Esophagus muscularis mucosa (tissue), 4 donors: ENCODE measurements at regions of chr18 and their contacts with region 1.

Region 1: DNA sequence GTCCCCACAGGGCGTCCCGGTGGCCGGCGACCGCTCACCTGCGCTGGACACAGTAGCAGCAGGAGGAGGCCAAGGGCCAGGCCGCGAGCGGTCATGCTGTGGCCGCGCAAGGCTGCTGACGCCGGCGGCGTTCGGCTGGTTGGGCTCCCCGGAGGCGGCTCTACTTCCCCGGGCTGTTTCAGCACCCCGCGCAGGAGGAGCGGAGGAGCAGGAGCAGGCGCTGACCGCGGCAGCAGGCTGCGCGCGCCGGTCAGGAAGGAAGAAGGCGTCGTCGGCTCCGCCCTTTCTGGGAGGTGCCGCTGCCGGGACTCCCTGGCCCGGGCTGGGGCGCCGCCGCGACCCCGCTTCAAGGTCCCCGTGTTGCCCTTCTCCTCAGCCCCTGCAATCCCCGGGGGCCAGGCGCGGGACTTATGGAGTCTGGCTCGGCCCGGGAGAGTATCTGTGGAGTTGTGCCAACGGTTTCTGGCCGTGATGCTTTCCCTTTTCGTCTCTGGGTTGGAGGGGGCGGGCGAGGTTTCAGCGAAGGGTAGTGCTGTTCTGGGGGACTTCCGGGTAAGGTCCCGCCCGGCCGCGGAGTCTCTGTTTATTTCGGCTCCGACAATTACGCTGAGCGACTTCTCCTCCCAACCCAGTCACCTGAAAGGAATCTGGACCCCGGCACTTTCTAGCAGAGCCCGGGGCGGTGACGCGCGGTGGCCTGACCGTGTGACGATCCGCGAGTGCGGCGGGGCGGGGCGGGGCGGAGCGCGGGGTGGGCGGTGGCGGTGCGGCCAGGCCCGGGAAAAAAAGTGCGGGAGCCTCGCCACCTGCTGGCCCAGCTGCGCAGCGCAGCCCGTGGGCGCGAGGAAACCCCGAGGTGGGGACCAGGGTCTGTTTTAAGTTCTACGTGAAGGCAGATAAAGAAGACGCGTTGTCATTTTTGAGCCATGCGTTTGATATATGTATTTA is at the start of gene NPC1:
- DNase-seq: peak; percentile 97
- H3K4me3 ChIP-seq: peak within 1 kb of the TSS; percentile 84 to 97 (median 92)
- H3K27ac ChIP-seq: peak within 1 kb of the TSS; percentile 98 to 100 (median 99)
- H3K4me1 ChIP-seq: peaks cover 30 to 53% (median 49%) of the 10 kb centered on the region in 4 donors
- H3K27me3 ChIP-seq: no peaks in the 10 kb centered on the region
- CTCF ChIP-seq: peak; percentile 93 to 98 (median 98)
- EP300 ChIP-seq: no peak
- POLR2A ChIP-seq: peak; percentile 90
- total RNA-seq, gene NPC1: 39.9 to 63.7 (median 45.6) TPM

Region 2: DNA sequence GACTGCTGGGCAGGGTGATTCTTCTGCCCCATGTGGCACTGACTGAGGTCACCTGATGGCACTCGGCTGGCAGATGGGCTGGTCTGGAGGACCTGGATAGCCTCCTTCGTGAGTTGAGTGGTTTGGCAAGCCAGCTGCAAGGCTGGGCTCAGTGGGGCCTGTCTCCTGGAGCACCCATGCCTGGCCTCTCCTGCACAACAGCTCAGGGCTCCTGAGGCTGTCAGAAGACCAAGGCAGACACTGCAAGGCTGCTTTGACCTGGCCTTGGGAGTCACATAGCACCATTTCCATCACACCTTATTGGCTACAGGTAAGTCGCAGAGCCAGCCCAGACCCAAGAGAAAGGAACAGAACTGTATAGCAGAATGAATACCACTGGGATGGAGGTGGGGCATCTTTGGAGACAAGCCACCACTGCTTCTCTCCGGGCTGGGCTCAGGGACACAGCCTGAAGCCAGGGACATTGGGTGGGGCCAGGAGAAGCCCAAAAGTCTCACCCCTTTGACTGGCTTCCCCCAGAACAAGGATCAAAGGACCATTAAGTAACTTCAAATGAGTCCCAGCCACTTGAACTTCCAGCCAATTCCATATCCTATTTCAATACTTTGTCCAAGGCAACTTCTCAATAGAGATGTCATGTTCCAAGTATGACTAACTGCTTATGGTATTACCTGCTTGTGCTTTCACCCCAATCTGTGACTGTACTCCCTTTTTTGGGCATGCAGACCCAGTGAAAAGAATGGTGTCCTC is 294.9 kb before region 1 on chr18:
- intact Hi-C with region 1: no loop called
- DNase-seq: no peak
- H3K4me3 ChIP-seq: no peak overlapping the region
- H3K27ac ChIP-seq: no peak overlapping the region
- H3K4me1 ChIP-seq: peaks cover 0 to 6% (median 0%) of the 10 kb centered on the region in 4 donors
- H3K27me3 ChIP-seq: no peaks in the 10 kb centered on the region
- CTCF ChIP-seq: no peak
- EP300 ChIP-seq: no peak
- POLR2A ChIP-seq: no peak

Region 3: DNA sequence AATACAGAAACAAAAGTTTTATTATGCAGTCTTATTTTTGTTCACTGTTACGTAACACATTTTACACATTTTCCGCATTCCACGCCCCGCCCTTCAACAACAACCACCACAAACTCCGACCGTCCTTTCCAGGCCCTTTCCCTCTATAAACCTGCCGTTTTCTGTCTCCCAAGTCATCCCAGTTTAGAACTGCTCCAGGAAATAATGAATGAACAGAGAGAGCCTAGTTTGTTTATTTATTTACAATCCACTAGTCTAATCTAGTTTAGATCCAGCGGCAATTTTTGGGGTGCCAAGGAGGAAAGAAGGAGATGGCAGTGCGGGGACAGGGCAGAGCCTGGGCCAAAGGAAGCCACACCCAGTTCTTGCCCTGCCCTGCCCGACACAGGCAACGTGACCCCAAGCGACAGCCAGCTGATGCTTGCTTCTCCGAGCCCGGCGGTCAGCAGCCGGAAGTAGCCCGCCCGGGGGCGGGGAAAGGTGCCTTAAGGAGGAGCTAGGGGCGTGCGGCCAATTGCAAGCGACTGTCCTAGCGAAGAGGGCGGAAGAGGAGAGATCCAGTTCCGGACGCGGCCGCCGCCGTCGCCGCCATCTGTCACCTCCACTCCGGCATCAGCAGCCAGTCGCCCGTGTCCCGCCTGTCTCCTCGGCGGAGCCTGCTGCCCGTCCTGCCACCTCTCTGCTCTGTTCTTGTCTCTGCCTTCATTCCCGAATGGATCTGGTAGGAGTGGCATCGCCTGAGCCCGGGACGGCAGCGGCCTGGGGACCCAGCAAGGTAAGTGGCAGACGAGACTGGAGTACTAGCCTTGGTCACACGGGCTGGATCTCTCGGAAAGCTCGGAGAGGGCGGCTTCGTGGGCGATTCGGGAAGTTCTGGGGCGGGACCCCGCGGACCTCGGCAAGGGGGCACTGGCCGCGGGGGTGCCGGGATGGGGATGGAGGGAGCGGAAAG is 133.5 kb before region 1 on chr18 and contains the start of gene RIOK3:
- intact Hi-C with region 1: loop called (anchors 10 kb)
- DNase-seq: peak; percentile 98
- H3K4me3 ChIP-seq: peak within 1 kb of the TSS; percentile 89 to 99 (median 92)
- H3K27ac ChIP-seq: peak within 1 kb of the TSS; percentile 92 to 98 (median 95)
- H3K4me1 ChIP-seq: peaks cover 29 to 54% (median 50%) of the 10 kb centered on the region in 4 donors
- H3K27me3 ChIP-seq: no peaks in the 10 kb centered on the region
- CTCF ChIP-seq: no peak
- EP300 ChIP-seq: no peak
- POLR2A ChIP-seq: peak; percentile 89
- total RNA-seq, gene RIOK3: 38.7 to 52.2 (median 46.3) TPM

Region 4: DNA sequence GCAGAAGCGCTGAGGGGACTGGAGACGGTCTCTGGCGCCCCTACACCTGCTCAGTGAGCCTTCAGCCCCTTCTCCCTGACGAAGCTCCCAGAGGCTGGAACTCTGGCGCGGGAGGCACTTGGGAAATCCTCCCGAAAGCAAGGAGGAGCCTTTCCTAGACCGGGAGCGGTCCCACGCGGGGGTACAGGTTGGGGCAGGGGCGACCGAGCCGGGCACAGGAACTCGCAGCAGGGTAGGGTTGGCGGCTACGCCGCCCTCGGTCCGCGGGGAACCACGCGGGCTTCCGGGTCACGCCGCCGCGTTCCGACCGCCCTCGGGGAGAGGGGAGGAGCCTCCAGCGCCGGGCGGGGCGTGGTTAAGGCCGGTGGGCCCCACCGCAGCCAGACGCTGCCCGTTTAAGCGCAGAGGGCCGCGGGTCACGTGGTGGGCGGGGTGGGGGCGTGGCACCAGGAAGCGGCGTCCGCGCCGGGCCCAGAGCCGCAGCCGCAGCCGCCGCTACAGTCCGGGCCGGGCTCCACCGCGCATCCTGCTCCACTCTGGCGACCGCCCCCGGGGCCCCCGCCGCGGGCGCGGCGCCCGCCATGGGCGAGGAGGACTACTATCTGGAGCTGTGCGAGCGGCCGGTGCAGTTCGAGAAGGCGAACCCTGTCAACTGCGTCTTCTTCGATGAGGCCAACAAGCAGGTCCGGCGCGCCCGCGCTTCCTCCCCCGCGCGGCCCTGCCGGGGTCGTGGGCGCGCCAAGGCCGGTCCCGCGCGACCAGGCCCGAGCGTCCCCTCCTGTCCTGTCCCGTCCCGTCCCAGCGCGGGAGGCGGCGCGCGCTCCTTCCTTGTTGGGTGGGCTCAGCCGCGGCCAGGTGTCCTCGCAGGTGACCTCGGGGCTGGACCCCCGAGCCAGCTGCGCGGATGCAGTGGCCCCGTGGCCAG is 83.2 kb before region 1 on chr18 and contains the start of gene RMC1:
- intact Hi-C with region 1: loop called (anchors 5 kb)
- DNase-seq: peak; percentile 98
- H3K4me3 ChIP-seq: peak within 1 kb of the TSS; percentile 93 to 98 (median 96)
- H3K27ac ChIP-seq: peak within 1 kb of the TSS; percentile 88 to 97 (median 92)
- H3K4me1 ChIP-seq: peaks cover 19 to 64% (median 61%) of the 10 kb centered on the region in 4 donors
- H3K27me3 ChIP-seq: no peaks in the 10 kb centered on the region
- CTCF ChIP-seq: peak in 1 of 3 experiments; percentile 37
- EP300 ChIP-seq: no peak
- POLR2A ChIP-seq: peak; percentile 76
- total RNA-seq, gene RMC1: 24.9 to 41.0 (median 31.0) TPM

Region 5: DNA sequence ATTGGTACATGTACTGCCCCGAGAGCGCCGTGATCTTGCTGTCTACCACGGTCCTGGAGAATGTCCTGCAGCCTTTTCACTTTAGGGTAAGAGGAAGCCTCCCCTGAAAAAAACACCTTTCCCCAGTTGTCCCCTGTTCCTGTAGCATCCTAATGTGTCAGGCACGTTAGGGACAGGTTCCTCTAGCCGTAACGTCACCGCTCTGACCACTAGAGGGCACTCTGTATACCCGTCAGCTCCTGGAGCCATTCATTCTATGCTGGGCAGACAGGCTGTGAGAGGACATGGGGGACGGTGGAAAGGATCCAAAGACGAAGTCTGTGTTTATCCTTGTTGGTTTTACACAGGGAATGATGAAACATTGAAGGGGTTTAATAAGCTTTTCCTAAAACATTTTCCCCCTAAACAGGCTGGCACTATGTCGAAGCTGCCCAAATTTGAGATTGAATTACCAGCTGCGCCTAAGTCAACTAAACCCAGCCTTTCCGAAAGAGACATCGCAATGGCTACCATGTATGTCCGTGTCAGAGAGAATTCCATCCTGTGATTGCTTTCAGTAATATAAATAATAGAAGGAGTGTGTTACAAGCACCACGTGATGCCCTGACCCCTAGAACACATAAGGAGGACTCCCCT is 70.5 kb before region 1 on chr18:
- intact Hi-C with region 1: loop called (anchors 2 kb)
- DNase-seq: no peak
- H3K4me3 ChIP-seq: no peak overlapping the region
- H3K27ac ChIP-seq: peak overlapping the region in 1 of 4 donors; percentile 41
- H3K4me1 ChIP-seq: peaks cover 0 to 17% (median 8%) of the 10 kb centered on the region in 4 donors
- H3K27me3 ChIP-seq: no peaks in the 10 kb centered on the region
- CTCF ChIP-seq: peak; percentile 70 to 89 (median 79)
- EP300 ChIP-seq: no peak
- POLR2A ChIP-seq: no peak

Region 6: DNA sequence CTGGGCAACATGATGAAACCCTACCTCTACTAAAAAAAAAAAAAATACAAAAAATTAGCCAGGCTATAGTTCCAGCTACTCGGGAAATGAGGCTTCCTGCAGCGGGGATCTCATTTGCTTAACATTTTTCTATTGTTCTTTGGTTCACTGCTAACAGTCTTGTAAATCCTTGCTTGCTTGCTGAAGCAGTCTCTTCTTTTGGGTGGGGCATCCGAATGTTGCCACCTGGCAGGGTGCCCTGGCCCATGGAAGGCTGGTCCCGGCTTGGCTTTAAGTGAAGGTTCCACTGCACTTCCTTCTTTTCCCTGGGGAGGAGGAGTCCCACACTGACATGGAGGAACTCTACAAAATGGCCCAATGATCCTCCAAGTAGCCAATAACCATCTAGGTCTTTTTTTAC is 82.2 kb after region 1 on chr18:
- intact Hi-C with region 1: no loop called
- DNase-seq: no peak
- H3K4me3 ChIP-seq: no peak overlapping the region
- H3K27ac ChIP-seq: no peak overlapping the region
- H3K4me1 ChIP-seq: peaks cover 0 to 5% (median under 1%) of the 10 kb centered on the region in 4 donors
- H3K27me3 ChIP-seq: no peaks in the 10 kb centered on the region
- CTCF ChIP-seq: no peak
- EP300 ChIP-seq: no peak
- POLR2A ChIP-seq: no peak

Region 7: DNA sequence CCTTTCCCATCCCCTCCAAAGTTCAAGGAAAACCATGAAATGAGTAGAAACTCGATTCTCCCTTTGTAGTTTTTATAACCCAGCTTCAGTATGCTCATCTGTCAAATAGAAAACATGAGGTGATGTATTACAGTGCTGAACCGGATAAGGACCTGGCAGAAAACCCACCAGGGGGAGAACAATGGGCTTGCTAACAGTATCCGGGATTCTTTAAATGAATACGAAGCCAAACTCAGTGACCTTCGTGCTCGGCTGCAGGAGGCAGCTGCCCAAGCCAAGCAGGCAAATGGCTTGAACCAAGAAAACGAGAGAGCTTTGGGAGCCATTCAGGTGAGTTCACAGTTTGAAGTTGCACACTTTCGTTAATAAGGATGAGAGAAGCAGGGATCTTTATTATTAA is 314.5 kb after region 1 on chr18:
- intact Hi-C with region 1: no loop called
- DNase-seq: peak; percentile 80
- H3K4me3 ChIP-seq: no peak overlapping the region
- H3K27ac ChIP-seq: no peak overlapping the region
- H3K4me1 ChIP-seq: no peaks in the 10 kb centered on the region
- H3K27me3 ChIP-seq: no peaks in the 10 kb centered on the region
- CTCF ChIP-seq: no peak
- EP300 ChIP-seq: no peak
- POLR2A ChIP-seq: no peak